ENCODE measurements at regions of chr17 and their contacts with region 1.

Region 1: DNA sequence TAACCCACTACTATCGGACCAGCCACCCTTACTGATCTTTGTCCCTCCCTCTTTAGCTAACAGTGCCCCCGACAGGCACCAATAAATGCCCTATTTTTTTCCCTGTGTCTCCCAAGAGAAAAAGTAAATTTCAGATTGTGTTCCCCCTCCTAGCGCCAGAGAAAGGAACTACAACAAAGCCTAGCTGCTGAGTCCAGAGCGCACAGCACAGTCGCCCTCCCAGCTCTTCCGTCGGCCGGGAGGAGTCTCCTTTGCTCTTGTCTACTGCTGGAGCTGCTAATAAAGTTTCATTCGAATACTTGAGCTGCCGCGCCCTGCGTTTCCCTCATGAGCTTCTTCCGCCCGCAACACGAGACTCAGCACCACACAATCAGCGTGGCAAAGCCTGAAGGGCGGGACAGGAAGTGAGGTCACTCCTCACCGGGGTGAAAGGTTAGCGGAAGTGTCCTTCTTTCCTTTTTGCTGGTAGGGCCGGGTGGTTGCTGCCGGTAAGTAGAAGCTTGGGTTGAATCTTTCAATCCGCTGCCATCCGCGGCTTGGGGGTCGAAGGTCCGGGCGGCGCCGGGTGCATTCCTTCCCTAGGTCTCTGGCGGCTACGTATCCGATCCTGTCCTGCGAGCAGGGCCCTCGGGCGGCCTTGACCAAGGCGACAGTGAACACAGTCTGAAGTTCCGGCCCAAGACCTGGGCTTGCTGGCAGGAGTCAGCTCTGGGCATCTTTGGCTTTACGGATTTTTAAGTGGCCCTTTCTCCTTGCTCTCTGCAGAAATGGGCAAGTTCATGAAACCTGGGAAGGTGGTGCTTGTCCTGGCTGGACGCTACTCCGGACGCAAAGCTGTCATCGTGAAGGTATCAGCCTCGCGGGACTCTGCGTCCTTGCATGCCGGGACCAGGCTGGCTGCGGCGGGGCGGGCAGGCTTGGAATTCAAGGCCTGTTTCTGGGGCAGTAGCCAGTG is at the start of gene RPL27:
- DNase-seq: peak; percentile 99
- ATAC-seq: peak; percentile 97
- H3K4me3 Mint-ChIP-seq: peak within 1 kb of the TSS; percentile 96
- H3K27ac Mint-ChIP-seq: peak within 1 kb of the TSS; percentile 99
- H3K4me1 Mint-ChIP-seq: peaks cover 25% of the 10 kb centered on the region
- H3K27me3 Mint-ChIP-seq: no peaks in the 10 kb centered on the region
- CTCF ChIP-seq: peak; percentile 85
- total RNA-seq, gene RPL27: 1,640 to 1,647 TPM

Region 2: DNA sequence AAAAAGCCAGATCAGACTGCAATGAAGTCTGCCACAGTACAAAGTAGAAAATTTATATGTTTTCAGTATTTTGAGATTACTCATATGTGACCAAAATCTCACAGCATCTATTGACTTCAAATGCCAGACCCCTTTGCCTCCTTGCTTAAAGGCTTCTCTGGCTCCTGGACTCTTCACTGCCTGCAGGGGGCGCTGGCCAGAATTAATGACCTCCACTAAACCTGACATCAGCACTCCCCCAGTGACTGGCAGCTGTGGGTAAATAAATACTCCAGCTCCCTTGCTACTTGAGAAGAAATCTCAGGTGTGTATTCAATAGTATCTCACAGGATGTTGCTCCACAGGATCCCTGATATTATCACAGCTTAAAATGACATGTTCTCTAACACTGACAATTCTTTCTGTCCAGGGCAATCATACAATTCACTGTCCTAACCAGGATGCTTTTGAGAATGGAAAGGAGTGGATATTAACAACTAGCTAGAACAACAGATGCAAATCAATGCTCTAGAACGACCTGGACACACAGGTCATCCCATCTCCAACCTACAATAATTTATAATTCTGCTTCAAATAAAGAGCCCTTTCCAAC is 178.2 kb before region 1 on chr17:
- CTCF ChIA-PET with region 1: interaction called, 12 read pairs
- POLR2A ChIA-PET with region 1: interaction called, 7 read pairs
- intact Hi-C with region 1: no loop called
- DNase-seq: peak; percentile 90
- ATAC-seq: peak; percentile 50
- H3K4me3 Mint-ChIP-seq: no peak overlapping the region
- H3K27ac Mint-ChIP-seq: peak overlapping the region; percentile 41
- H3K4me1 Mint-ChIP-seq: peaks cover 34% of the 10 kb centered on the region
- H3K27me3 Mint-ChIP-seq: no peaks in the 10 kb centered on the region
- CTCF ChIP-seq: peak; percentile 82

Region 3: DNA sequence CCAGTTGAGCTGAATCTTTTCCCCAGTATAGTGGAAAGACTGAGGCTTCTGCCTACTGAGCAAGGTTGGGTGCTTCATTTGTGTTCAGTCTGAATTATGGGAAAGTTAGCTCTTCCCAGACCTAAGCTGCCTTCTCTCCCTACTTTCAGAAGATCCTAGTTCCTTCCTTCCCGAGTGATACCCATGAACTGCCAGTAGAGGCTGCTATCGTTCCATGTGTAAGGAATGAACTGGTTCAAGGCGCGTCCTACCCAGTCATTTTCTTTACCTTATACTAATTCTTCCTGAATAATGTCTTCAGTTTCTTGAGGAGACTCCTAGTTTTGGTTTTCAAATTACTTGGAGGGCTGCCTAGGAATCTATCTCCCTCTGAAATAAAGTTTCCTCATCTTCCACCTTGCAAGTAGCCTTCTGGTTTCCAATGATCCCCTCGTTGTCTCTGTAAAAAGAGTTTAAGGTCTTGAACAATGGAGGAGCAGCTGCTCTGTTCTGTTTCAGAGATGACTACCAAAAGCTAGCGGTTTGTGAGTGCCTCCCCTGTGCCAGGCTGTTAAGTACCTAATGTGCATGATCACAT is 154.8 kb before region 1 on chr17:
- CTCF ChIA-PET with region 1: interaction called, 12 read pairs
- POLR2A ChIA-PET with region 1: interaction called, 3 read pairs
- intact Hi-C with region 1: loop called (anchors 10 kb)
- DNase-seq: no peak
- ATAC-seq: peak; percentile 29
- H3K4me3 Mint-ChIP-seq: no peak overlapping the region
- H3K27ac Mint-ChIP-seq: no peak overlapping the region
- H3K4me1 Mint-ChIP-seq: peaks cover 21% of the 10 kb centered on the region
- H3K27me3 Mint-ChIP-seq: no peaks in the 10 kb centered on the region
- CTCF ChIP-seq: no peak

Region 4: DNA sequence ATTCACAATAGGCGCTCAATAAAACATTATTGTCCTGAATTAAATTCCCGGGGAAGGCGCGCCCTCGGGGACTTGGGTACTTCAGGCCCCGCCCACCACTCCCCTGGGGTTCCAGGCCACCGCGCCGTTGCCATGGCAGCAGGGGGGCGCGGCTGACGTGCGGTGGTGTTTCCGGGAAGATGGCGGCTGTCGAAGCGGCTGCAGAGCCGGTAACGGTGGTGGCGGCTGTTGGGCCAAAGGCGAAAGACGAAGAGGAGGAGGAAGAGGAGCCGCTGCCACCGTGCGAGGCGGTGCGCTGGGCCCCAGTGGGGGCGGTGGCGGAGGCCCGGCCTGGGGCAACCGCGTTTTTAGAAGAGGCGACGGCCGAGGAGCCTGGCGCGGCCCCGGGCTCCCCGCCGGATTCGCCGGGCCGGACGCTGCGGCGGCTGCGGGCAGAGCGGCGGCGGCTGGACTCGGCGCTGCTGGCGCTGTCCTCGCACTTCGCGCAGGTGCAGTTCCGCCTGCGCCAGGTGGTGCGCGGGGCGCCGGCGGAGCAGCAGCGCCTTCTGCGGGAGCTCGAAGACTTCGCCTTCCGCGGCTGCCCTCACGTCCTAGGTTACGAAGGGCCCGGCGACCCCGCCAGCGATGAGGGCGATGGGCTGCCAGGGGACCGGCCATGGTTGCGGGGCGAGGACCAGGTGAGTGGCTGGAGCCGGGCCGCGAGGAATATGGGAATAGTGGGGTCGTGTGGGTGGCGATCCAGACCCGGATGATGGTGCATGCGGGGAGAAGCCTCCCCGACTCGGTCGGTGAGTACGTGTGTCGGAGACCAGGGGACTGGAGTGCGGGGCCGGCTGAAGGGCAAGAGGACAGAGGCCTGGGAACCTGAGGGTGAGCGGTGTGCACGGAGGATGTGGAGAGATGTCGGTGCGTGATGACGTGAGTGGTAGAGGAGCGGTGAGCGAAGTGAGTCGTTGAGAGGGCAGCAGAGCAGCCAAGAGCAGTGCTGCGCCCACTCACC is 17.6 kb before region 1 on chr17 and contains the start of gene RUNDC1:
- CTCF ChIA-PET with region 1: interaction called, 10 read pairs
- POLR2A ChIA-PET with region 1: interaction called, 17 read pairs
- intact Hi-C with region 1: no loop called
- DNase-seq: peak; percentile 94
- ATAC-seq: peak; percentile 86
- H3K4me3 Mint-ChIP-seq: peak within 1 kb of the TSS; percentile 96
- H3K27ac Mint-ChIP-seq: peak within 1 kb of the TSS; percentile 99
- H3K4me1 Mint-ChIP-seq: peaks cover 28% of the 10 kb centered on the region
- H3K27me3 Mint-ChIP-seq: no peaks in the 10 kb centered on the region
- CTCF ChIP-seq: no peak
- total RNA-seq, gene RUNDC1: 16.1 to 17.0 TPM

Region 5: DNA sequence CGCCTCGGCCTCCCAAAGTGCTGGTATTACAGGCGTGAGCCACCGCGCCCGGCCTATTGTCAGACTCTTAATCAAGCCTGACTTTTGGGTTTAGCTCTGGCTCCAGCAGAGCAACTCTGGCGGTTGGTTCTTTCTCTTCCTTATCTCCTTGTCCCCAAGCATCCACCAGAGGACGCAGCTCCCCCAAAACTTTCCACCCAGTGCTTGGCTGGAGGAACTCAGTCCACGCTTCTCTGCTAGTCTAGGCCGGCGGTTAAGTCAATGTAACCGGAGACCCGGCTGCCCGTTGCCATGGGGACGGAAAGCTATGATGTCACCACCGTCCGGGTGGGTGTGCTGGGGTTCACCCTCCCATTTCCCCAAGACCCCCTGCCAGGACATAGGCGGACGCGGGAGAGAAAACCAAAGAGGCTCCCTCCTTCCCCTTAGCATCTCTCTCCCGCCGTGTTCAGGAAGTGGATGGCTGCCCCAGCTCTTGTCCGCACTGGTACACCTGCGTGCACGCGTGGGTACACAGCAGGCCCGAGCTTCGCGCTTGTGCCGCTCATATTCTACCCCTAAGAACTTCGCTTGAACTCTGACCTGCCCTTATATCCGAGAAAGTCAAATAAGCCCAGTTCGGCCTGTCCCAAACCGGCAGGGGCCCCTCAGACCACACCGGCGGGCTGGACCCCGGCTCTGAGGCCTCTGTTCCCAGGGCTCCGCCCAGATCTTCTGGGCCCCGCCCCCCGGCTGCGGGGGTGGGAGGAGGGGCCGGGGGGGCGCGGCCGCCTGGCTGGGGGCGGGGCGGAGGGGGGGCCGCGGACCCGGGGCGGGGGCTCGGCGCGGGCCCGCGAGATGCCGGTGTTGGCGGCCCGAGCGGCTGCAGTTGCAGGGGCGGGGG is 26.4 kb after region 1 on chr17 and contains the start of gene RND2:
- CTCF ChIA-PET with region 1: interaction called, 5 read pairs
- POLR2A ChIA-PET with region 1: interaction called, 25 read pairs
- intact Hi-C with region 1: no loop called
- DNase-seq: peak; percentile 92
- ATAC-seq: peak; percentile 69
- H3K4me3 Mint-ChIP-seq: peak within 1 kb of the TSS; percentile 75
- H3K27ac Mint-ChIP-seq: peak within 1 kb of the TSS; percentile 53
- H3K4me1 Mint-ChIP-seq: peaks cover 25% of the 10 kb centered on the region
- H3K27me3 Mint-ChIP-seq: no peaks in the 10 kb centered on the region
- CTCF ChIP-seq: no peak
- total RNA-seq, gene RND2: not detected

Region 6: GRCh38 chr17:43051969-43052368 is 53.7 kb after region 1 on chr17:
- CTCF ChIA-PET with region 1: no interaction called
- POLR2A ChIA-PET with region 1: no interaction called
- intact Hi-C with region 1: no loop called
- DNase-seq: no peak
- ATAC-seq: no peak
- H3K4me3 Mint-ChIP-seq: no peak overlapping the region
- H3K27ac Mint-ChIP-seq: no peak overlapping the region
- H3K4me1 Mint-ChIP-seq: no peaks in the 10 kb centered on the region
- H3K27me3 Mint-ChIP-seq: no peaks in the 10 kb centered on the region
- CTCF ChIP-seq: no peak

Measured in activated CD8-positive, alpha-beta T cell treated with anti-CD3 and anti-CD28 coated beads for 36 hours (primary cell).